ENCODE measurements at regions of chrX and their contacts with region 1.

Region 1: DNA sequence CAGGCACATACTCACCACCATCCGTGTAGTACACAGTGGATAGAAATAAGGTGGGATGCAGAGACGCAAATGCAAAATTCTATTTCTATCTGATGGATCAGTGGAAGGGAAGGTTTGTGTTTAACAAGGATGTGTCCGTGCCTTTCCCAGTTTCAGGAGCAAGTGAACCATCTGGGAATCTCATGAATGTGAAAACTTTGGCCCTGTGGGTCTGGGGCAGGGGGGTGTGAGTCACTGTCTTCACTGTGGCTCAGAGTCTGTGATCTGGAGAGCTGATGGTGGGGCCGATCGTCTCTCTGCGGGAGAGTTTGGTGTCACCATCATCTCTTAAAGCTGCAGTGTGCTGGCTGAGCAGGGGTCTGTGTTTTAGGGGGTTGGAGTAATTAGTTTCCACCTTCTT is 179.3 kb upstream of the STS start:
- DNase-seq: no peak
- H3K4me3 ChIP-seq: no peak overlapping the region
- CTCF ChIP-seq: no peak

Region 2: GRCh38 chrX:6904156-6904555 is 64.1 kb before region 1 on chrX:
- in situ Hi-C with region 1: loop called (anchors 10 kb)
- DNase-seq: no peak
- H3K4me3 ChIP-seq: no peak overlapping the region
- CTCF ChIP-seq: no peak